ENCODE measurements at regions of chr5 and their contacts with region 1.

Region 1: DNA sequence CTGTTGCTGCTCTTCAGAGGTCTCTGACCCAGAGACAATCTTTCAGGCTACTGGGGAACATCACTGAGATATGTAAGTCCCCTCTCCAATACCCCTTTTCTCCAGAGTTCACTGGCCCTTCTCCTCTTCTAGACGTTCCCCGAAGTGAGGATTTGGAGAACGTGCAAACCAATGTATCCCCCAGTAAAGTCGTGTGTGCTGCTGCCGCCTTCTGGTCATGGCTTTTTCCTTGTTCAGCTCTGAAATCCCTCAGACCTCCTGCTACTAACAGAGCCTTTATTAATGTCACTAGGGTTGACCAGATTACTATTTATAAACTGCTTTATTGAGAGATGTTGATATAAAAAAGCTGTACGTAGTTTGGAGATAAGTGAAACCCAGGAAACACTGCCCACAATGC is 1028.6 kb downstream of the CDH9 start:
- DNase-seq: peak; percentile 35
- H3K4me3 ChIP-seq: no peak overlapping the region
- H3K27ac ChIP-seq: no peak overlapping the region
- H3K4me1 ChIP-seq: no peaks in the 10 kb centered on the region
- H3K27me3 ChIP-seq: no peaks in the 10 kb centered on the region
- CTCF ChIP-seq: peak; percentile 48

Region 2: DNA sequence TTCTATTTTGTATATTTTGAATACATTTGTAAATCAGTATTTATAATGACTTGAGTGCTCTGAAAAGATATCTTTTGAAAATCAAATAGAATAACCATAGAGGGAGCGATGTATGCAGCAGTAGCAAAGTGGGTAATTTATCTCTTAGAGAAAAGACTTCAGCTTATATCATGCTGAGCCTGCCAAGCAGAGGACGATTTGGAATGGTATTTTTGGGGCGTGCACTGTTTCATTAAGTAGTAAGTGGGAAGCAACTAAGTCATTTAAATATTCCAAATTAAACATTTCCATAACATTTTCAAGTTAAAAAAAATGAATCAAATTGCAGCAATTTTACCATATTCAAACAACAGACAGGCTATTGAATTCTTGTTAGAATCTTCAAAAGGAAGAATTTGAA is 1512.6 kb before region 1 on chr5:
- CTCF ChIA-PET with region 1: no interaction called
- POLR2A ChIA-PET with region 1: no interaction called
- intact Hi-C with region 1: no loop called
- DNase-seq: peak; percentile 3
- H3K4me3 ChIP-seq: no peak overlapping the region
- H3K27ac ChIP-seq: no peak overlapping the region
- H3K4me1 ChIP-seq: peaks cover 9% of the 10 kb centered on the region
- H3K27me3 ChIP-seq: no peaks in the 10 kb centered on the region
- CTCF ChIP-seq: no peak

Region 3: GRCh38 chr5:25763781-25764180 is 246.0 kb before region 1 on chr5:
- CTCF ChIA-PET with region 1: no interaction called
- POLR2A ChIA-PET with region 1: no interaction called
- intact Hi-C with region 1: loop called (anchors 10 kb)
- DNase-seq: no peak
- H3K4me3 ChIP-seq: no peak overlapping the region
- H3K27ac ChIP-seq: no peak overlapping the region
- H3K4me1 ChIP-seq: no peaks in the 10 kb centered on the region
- H3K27me3 ChIP-seq: no peaks in the 10 kb centered on the region
- CTCF ChIP-seq: no peak

Measured in A673 (cell line).